AG04449 (cell line): ENCODE measurements at regions of chr6 and their contacts with region 1.

Region 1: DNA sequence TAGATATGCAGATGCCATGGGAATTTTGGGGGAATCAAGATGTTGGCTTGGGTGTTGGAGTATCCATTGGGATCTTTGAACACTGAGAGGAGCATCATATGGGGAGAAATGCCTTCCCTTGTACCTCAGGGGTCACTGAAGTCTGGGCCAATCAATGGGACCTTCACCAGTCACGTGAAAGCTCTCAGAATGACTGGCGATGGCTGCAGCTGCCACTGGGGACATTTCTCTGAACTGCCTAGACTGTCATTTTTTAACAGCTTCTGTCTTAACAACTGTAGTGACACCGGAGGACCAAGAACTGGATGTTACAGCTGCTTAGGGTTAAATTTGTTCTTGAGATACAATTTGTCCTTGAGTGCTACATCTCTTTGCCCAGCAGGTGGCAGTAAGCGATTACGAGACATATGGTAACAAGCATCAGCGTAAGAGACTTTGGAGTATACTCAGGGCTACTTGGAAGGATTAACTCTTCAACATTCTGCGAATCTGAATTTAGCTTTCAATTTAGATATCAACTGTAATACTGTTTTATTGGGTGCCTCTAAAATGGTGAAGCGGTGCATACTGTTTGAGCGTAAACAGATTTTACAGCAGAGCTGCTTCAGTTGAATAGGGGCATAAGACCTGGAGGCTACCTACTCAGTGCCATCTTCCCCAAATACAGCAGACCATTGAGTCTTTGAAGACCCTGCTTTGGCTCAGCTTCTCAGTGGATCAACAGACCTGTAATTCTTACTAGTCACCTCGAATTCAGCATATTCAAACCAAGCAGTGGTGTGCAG is 36.0 kb downstream of the CCN2 start:
- DNase-seq: no peak
- H3K4me3 ChIP-seq: no peak overlapping the region
- CTCF ChIP-seq: peak; percentile 72

Region 2: DNA sequence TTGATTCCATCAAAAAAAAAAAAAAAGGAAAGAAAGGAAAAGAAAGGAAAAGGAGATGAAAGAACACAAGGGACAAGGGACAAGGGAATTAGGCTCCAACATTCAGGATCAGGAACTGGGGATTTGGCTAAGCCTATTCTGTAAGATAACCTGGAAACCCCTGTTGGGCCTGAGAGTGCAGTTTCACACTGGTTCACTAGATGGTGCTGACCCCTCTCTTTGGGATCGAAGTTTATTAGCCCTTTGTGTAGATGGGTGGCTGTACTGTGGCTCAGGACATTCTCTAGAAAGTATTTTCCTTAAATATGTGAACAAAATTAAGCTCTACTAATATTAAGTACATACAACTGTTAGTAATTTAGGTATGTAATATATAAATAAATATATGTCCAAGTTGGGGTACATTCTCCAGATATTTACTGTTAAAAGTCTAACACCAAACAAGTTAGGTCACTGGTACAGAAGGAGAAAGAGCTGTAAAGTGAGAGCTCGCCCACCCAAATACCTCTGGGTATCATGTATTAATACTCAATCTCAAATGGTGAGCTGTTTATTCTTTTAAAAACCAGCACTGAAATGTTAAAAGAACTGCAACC is 220.2 kb before region 1 on chr6:
- CTCF ChIA-PET with region 1: interaction called, 200 read pairs
- POLR2A ChIA-PET with region 1: no interaction called
- DNase-seq: no peak
- H3K4me3 ChIP-seq: no peak overlapping the region
- CTCF ChIP-seq: peak; percentile 91

Region 3: DNA sequence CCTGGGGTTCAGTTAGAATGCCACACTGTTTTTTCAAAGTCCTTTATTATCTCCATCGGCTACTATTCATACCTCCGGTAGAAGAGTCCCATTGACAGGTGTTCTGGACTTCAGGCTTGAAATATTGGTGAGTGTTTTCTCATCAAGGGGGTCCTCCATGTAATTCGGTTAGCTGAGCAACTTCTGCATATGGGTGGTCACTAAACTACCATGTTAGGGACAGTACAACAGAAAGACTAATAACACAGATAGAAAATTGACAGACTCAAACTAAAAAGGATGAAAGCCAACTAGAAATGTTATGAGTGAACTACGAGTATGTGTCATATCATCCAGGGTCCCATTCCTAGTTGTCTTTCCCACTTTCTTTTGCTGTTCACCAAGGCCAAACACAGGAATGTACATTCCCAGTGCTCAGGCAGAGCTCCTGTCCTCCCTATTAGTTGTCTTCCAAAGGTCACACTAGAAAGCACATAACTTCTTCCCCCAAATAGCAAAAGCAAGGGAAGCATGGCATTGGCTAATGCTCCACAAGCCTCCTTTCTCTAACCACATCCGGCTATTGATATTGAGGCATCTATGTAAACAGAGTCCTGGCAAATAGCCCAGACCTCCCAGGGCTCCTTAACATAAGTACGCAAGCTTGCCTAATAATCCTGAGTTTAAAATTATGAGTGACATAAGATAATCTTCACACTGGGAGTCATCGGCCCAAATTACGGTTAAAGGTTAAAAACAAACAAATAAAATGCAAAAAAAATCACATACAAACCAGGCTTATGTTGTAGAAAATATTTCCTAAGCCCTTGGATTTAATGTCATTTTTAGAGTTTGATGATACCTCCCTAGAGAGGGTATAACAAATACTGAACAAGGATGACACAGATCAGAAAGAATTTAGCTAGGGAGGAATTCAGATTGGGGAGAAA is 22.8 kb after region 1 on chr6:
- CTCF ChIA-PET with region 1: interaction called, 26 read pairs
- POLR2A ChIA-PET with region 1: no interaction called
- DNase-seq: peak; percentile 64
- H3K4me3 ChIP-seq: no peak overlapping the region
- CTCF ChIP-seq: no peak

Region 4: GRCh38 chr6:132259070-132259469 is 343.9 kb after region 1 on chr6:
- CTCF ChIA-PET with region 1: interaction called, 97 read pairs
- POLR2A ChIA-PET with region 1: no interaction called
- DNase-seq: no peak
- H3K4me3 ChIP-seq: no peak overlapping the region
- CTCF ChIP-seq: peak; percentile 19

Region 5: GRCh38 chr6:132300323-132300949 is 385.3 kb after region 1 on chr6:
- CTCF ChIA-PET with region 1: interaction called, 162 read pairs
- POLR2A ChIA-PET with region 1: no interaction called
- DNase-seq: no peak
- H3K4me3 ChIP-seq: no peak overlapping the region
- CTCF ChIP-seq: peak; percentile 65